Breast epithelium (tissue), 4 donors: ENCODE measurements at regions of chr19 and their contacts with region 1.

Region 1: GRCh38 chr19:18580311-18580710 is 8.3 kb upstream of the REX1BD start:
- DNase-seq: no peak
- H3K4me3 ChIP-seq: no peak overlapping the region
- H3K27ac ChIP-seq: no peak overlapping the region
- H3K4me1 ChIP-seq: no peaks in the 10 kb centered on the region
- H3K27me3 ChIP-seq: no peaks in the 10 kb centered on the region
- CTCF ChIP-seq: no peak
- POLR2A ChIP-seq: no peak

Region 2: GRCh38 chr19:18532168-18532890 is 48.0 kb before region 1 on chr19:
- intact Hi-C with region 1: loop called (anchors 2 kb)
- DNase-seq: no peak
- H3K4me3 ChIP-seq: no peak overlapping the region
- H3K27ac ChIP-seq: no peak overlapping the region
- H3K4me1 ChIP-seq: no peaks in the 10 kb centered on the region
- H3K27me3 ChIP-seq: no peaks in the 10 kb centered on the region
- CTCF ChIP-seq: no peak
- POLR2A ChIP-seq: no peak

Region 3: GRCh38 chr19:18629166-18630088 is 49.1 kb after region 1 on chr19:
- intact Hi-C with region 1: no loop called
- DNase-seq: no peak
- H3K4me3 ChIP-seq: no peak overlapping the region
- H3K27ac ChIP-seq: no peak overlapping the region
- H3K4me1 ChIP-seq: no peaks in the 10 kb centered on the region
- H3K27me3 ChIP-seq: no peaks in the 10 kb centered on the region
- CTCF ChIP-seq: no peak
- POLR2A ChIP-seq: no peak